Natural killer cell (primary cell): ENCODE measurements at regions of chr6 and their contacts with region 1.

Region 1: GRCh38 chr6:166382933-166383801 is at the start of gene MPC1:
- DNase-seq: peak; percentile 94 to 96
- ATAC-seq: peak; percentile 92 to 99 (median 95)
- H3K4me3 ChIP-seq: peak within 1 kb of the TSS; percentile 75
- H3K4me3 Mint-ChIP-seq: peak within 1 kb of the TSS; percentile 94
- H3K27ac ChIP-seq: peak within 1 kb of the TSS; percentile 75
- H3K27ac Mint-ChIP-seq: peak within 1 kb of the TSS; percentile 88 to 92
- H3K4me1 ChIP-seq: peaks cover 15% of the 10 kb centered on the region
- H3K4me1 Mint-ChIP-seq: peaks cover 9 to 13% of the 10 kb centered on the region in 2 donors
- H3K27me3 ChIP-seq: no peaks in the 10 kb centered on the region
- H3K27me3 Mint-ChIP-seq: no peaks in the 10 kb centered on the region
- CTCF ChIP-seq: no peak
- total RNA-seq, gene MPC1: 26.3 to 31.1 (median 30.4) TPM

Region 2: DNA sequence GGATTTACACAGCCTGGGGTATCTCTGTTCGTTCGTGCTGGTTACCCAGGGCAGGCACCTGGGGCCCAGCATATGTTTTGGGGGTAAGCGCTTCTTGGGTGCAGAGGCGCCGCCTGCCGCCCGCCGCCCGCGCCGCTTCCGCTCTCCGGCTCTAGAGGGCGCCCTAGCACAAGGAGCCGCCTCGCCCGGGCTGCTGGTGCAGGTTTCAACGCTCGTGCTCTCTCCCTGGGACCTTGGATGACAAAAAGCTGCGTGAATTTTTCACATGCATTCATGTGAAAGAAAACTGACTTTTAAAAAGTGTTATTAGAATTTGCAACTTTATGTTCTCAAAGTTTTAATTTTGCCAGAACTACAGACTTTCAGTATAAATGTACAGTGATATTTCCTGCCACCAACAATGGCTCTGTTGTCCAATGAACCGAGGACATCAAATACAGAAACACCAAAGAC is 107.4 kb before region 1 on chr6:
- intact Hi-C with region 1: loop called (anchors 1 kb)
- DNase-seq: peak; percentile 80 to 83
- ATAC-seq: peak; percentile 89 to 99 (median 98)
- H3K4me3 ChIP-seq: no peak overlapping the region
- H3K4me3 Mint-ChIP-seq: peak overlapping the region; percentile 42
- H3K27ac ChIP-seq: no peak overlapping the region
- H3K27ac Mint-ChIP-seq: peak overlapping the region in 1 of 2 donors; percentile 47
- H3K4me1 ChIP-seq: peaks cover 2% of the 10 kb centered on the region
- H3K4me1 Mint-ChIP-seq: peaks cover 8 to 9% of the 10 kb centered on the region in 2 donors
- H3K27me3 ChIP-seq: no peaks in the 10 kb centered on the region
- H3K27me3 Mint-ChIP-seq: peaks cover 9 to 22% of the 10 kb centered on the region in 2 donors
- CTCF ChIP-seq: peak; percentile 99

Region 3: GRCh38 chr6:166313255-166314070 is 69.7 kb before region 1 on chr6:
- intact Hi-C with region 1: loop called (anchors 1 kb)
- DNase-seq: peak; percentile 45 to 77
- ATAC-seq: peak; percentile 95 to 100 (median 97)
- H3K4me3 ChIP-seq: no peak overlapping the region
- H3K4me3 Mint-ChIP-seq: no peak overlapping the region
- H3K27ac ChIP-seq: no peak overlapping the region
- H3K27ac Mint-ChIP-seq: no peak overlapping the region
- H3K4me1 ChIP-seq: peaks cover 2% of the 10 kb centered on the region
- H3K4me1 Mint-ChIP-seq: peaks cover 1 to 6% of the 10 kb centered on the region in 2 donors
- H3K27me3 ChIP-seq: peaks cover 6% of the 10 kb centered on the region
- H3K27me3 Mint-ChIP-seq: peaks cover 17% of the 10 kb centered on the region in 2 donors
- CTCF ChIP-seq: peak; percentile 66

Region 4: GRCh38 chr6:166325383-166326042 is 57.7 kb before region 1 on chr6:
- intact Hi-C with region 1: loop called (anchors 5 kb)
- DNase-seq: no peak
- ATAC-seq: peak; percentile 72 to 92 (median 89)
- H3K4me3 ChIP-seq: no peak overlapping the region
- H3K4me3 Mint-ChIP-seq: peak overlapping the region; percentile 49
- H3K27ac ChIP-seq: peak overlapping the region; percentile 8
- H3K27ac Mint-ChIP-seq: peak overlapping the region; percentile 72 to 81
- H3K4me1 ChIP-seq: peaks cover 14% of the 10 kb centered on the region
- H3K4me1 Mint-ChIP-seq: peaks cover 44 to 49% of the 10 kb centered on the region in 2 donors
- H3K27me3 ChIP-seq: no peaks in the 10 kb centered on the region
- H3K27me3 Mint-ChIP-seq: no peaks in the 10 kb centered on the region
- CTCF ChIP-seq: no peak

Region 5: GRCh38 chr6:166342349-166343149 is 40.6 kb before region 1 on chr6 and contains the start of gene SFT2D1:
- intact Hi-C with region 1: loop called (anchors 1 kb)
- DNase-seq: peak; percentile 79 to 90
- ATAC-seq: peak; percentile 76 to 89 (median 86)
- H3K4me3 ChIP-seq: peak within 1 kb of the TSS; percentile 96
- H3K4me3 Mint-ChIP-seq: peak within 1 kb of the TSS; percentile 97
- H3K27ac ChIP-seq: peak within 1 kb of the TSS; percentile 99
- H3K27ac Mint-ChIP-seq: peak within 1 kb of the TSS; percentile 93 to 97
- H3K4me1 ChIP-seq: peaks cover 40% of the 10 kb centered on the region
- H3K4me1 Mint-ChIP-seq: peaks cover 18 to 19% of the 10 kb centered on the region in 2 donors
- H3K27me3 ChIP-seq: no peaks in the 10 kb centered on the region
- H3K27me3 Mint-ChIP-seq: peaks cover 3 to 7% of the 10 kb centered on the region in 2 donors
- CTCF ChIP-seq: no peak
- total RNA-seq, gene SFT2D1: 32.8 to 44.7 (median 33.5) TPM

Region 6: DNA sequence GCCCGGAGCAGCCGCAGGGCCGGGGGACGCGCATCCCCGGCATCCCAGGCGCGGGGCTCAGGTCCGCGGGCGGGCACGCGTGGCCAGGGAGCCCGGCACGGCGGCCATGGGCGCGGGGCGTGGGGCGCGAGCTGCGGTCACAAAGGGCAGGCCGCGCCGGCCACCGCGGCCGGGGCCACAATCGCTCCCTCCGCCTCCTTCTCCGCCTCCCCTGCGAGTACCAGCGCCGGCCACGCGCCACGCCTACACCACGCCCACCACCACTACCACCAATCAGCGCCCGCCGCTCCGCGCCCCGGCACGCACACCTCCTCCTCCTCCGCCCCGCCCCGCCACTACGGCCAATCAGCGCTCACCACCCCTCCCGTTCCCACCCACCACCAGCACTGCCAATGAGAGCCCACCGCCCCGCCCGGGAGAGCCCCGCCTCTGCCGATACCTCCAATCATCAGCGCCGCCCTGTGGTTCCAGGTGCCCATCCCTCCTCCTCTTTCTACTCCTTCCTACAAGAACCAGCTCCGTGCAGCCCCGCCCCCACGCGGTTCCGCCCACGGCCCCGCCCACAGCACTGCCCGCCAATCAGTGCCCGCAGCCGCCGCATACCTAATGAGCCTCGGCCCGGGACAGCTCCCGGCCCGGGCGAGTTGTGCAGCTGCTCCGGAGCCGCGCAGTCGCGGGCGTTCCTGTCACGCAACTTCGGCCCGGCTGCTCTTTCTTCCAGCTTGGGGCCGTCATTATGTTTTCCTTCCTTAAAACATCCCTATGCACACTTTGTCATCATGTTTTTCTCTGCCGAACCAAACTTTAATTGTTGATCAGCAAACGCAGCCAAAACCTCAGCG is 244.1 kb after region 1 on chr6 and contains the start of gene RPS6KA2:
- intact Hi-C with region 1: loop called (anchors 5 kb)
- DNase-seq: peak; percentile 99 to 100
- ATAC-seq: peak; percentile 90 to 97 (median 90)
- H3K4me3 ChIP-seq: peak within 1 kb of the TSS; percentile 59
- H3K4me3 Mint-ChIP-seq: peak within 1 kb of the TSS; percentile 95
- H3K27ac ChIP-seq: peak within 1 kb of the TSS; percentile 32
- H3K27ac Mint-ChIP-seq: peak within 1 kb of the TSS; percentile 36 to 90
- H3K4me1 ChIP-seq: peaks cover 20% of the 10 kb centered on the region
- H3K4me1 Mint-ChIP-seq: peaks cover 19 to 29% of the 10 kb centered on the region in 2 donors
- H3K27me3 ChIP-seq: peaks cover 22% of the 10 kb centered on the region
- H3K27me3 Mint-ChIP-seq: peaks cover 38 to 47% of the 10 kb centered on the region in 2 donors
- CTCF ChIP-seq: no peak
- total RNA-seq, gene RPS6KA2: 2.8 to 4.5 (median 2.9) TPM